Sigmoid colon (tissue), 7 donors: ENCODE measurements at regions of chr11 and their contacts with region 1.

Region 1: GRCh38 chr11:9506489-9507276 is 45.9 kb downstream of the ZNF143 start:
- DNase-seq: peak; percentile 80
- H3K4me3 ChIP-seq: no peak overlapping the region
- H3K27ac ChIP-seq: peak overlapping the region in 2 of 4 donors; percentile 1 to 23
- H3K4me1 ChIP-seq: peaks cover 0 to 9% (median 6%) of the 10 kb centered on the region in 4 donors
- H3K27me3 ChIP-seq: no peaks in the 10 kb centered on the region
- CTCF ChIP-seq: peak; percentile 62 to 88 (median 80)
- EP300 ChIP-seq: no peak
- POLR2A ChIP-seq: no peak

Region 2: DNA sequence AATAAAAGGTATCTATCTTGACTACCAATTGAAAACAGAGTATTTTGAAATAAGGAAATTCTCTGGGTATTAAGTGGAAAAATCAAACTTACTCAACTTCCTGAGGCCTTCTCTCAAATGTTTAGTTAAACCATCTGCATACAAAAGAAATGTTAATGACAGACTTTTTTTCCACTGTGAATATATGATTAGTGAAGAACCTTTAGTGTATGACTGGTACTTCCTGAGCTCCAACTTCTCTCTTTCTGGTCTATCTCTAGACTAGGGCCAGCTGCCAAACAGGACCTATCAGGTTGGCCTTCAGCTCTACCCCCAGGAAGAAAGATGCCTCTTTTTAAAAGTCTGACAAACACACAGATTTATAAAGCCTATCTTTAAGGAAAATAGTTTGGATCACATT is 346.5 kb before region 1 on chr11:
- intact Hi-C with region 1: loop called (anchors 10 kb)
- DNase-seq: no peak
- H3K4me3 ChIP-seq: no peak overlapping the region
- H3K27ac ChIP-seq: no peak overlapping the region
- H3K4me1 ChIP-seq: no peaks in the 10 kb centered on the region
- H3K27me3 ChIP-seq: no peaks in the 10 kb centered on the region
- CTCF ChIP-seq: no peak
- EP300 ChIP-seq: no peak
- POLR2A ChIP-seq: no peak